Calu3 (cell line): ENCODE measurements at regions of chr4 and their contacts with region 1.

Region 1: GRCh38 chr4:40992472-40993295 is 221.7 kb downstream of the APBB2 start:
- DNase-seq: no peak
- H3K4me3 Mint-ChIP-seq: no peak overlapping the region
- H3K27ac Mint-ChIP-seq: peak overlapping the region; percentile 7
- H3K4me1 Mint-ChIP-seq: peaks cover 29% of the 10 kb centered on the region
- H3K27me3 Mint-ChIP-seq: no peaks in the 10 kb centered on the region
- CTCF ChIP-seq: no peak

Region 2: DNA sequence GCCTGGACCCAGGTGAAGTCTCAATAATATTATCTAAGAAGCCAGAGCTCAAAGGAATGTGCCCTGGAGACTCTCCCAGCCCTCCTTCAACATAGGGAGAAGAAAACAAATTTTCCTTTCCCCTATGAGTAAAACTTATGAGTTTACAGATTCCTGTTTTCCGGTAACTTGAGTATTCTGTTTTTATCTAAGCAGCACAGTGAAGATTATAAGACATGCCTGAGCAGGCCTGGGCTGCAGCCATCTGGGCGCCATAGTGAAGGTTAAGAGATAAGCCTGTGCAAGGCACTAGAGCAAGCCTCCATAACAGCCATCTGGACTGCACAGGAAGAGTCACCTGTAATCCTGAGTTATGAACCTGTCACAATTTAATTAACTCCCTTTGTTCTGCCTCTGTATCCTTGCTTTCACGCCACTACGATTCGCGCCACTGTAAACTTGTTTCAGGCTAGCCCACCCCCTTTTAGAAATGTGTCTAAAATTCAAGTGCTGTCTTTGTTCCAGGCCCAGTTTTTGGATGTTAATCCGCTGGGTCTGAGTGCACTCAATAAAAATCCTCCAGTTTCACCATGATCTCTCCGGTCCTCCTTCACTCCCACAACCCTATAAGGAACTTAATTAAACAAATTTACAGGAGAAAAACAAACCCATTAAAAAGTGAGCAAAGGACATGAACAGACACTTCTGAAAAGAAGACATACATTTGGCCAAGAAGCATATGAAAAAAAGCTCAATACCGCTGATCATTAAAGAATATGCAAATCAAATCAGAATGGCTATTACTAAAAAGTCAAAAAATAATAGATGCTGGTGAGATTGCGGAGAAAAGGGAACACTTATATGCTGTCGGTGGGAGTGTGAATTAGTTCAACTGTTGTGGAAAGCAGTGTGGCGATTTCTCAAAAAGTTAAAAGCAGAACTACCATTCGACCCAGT is 32.1 kb after region 1 on chr4:
- CTCF ChIA-PET with region 1: no interaction called
- intact Hi-C with region 1: loop called (anchors 5 kb)
- DNase-seq: no peak
- H3K4me3 Mint-ChIP-seq: no peak overlapping the region
- H3K27ac Mint-ChIP-seq: no peak overlapping the region
- H3K4me1 Mint-ChIP-seq: peaks cover 14% of the 10 kb centered on the region
- H3K27me3 Mint-ChIP-seq: no peaks in the 10 kb centered on the region
- CTCF ChIP-seq: no peak